Activated naive CD4-positive, alpha-beta T cell treated with anti-CD3 and anti-CD28 coated beads for 36 hours (primary cell): ENCODE measurements at regions of chr19 and their contacts with region 1.

Region 1: GRCh38 chr19:48872182-48872883 is at the start of gene PPP1R15A:
- DNase-seq: peak; percentile 99
- H3K4me3 Mint-ChIP-seq: peak within 1 kb of the TSS; percentile 99
- H3K27ac Mint-ChIP-seq: peak within 1 kb of the TSS; percentile 99
- H3K4me1 Mint-ChIP-seq: peaks cover 34% of the 10 kb centered on the region
- H3K27me3 Mint-ChIP-seq: no peaks in the 10 kb centered on the region
- total RNA-seq, gene PPP1R15A: 96.5 to 97.4 TPM

Region 2: GRCh38 chr19:48713864-48714758 is 158.2 kb before region 1 on chr19:
- CTCF ChIA-PET with region 1: no interaction called
- intact Hi-C with region 1: loop called (anchors 1 kb)
- DNase-seq: peak; percentile 99
- H3K4me3 Mint-ChIP-seq: peak overlapping the region; percentile 86
- H3K27ac Mint-ChIP-seq: peak overlapping the region; percentile 58
- H3K4me1 Mint-ChIP-seq: peaks cover 11% of the 10 kb centered on the region
- H3K27me3 Mint-ChIP-seq: no peaks in the 10 kb centered on the region

Region 3: DNA sequence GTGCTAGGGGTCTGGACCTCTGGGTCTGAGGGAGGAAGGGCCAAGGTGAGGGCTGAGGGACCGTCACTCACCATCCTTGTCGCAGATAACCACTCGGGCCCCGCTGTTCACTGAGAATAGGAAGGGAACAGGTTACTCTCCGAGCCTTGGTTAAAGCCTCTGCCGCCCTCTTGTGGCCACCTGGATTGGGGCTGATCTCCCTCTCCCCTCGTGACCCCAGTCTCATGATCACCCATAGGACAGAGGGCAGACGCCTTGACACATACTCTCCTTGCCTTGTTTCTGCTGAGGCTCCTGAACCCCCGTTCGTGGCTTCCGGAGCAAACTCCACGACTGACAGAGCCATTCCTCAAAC is 36.6 kb before region 1 on chr19:
- CTCF ChIA-PET with region 1: no interaction called
- intact Hi-C with region 1: loop called (anchors 2 kb)
- DNase-seq: peak; percentile 98
- H3K4me3 Mint-ChIP-seq: peak overlapping the region; percentile 73
- H3K27ac Mint-ChIP-seq: no peak overlapping the region
- H3K4me1 Mint-ChIP-seq: peaks cover 20% of the 10 kb centered on the region
- H3K27me3 Mint-ChIP-seq: peaks cover 2% of the 10 kb centered on the region

Region 4: DNA sequence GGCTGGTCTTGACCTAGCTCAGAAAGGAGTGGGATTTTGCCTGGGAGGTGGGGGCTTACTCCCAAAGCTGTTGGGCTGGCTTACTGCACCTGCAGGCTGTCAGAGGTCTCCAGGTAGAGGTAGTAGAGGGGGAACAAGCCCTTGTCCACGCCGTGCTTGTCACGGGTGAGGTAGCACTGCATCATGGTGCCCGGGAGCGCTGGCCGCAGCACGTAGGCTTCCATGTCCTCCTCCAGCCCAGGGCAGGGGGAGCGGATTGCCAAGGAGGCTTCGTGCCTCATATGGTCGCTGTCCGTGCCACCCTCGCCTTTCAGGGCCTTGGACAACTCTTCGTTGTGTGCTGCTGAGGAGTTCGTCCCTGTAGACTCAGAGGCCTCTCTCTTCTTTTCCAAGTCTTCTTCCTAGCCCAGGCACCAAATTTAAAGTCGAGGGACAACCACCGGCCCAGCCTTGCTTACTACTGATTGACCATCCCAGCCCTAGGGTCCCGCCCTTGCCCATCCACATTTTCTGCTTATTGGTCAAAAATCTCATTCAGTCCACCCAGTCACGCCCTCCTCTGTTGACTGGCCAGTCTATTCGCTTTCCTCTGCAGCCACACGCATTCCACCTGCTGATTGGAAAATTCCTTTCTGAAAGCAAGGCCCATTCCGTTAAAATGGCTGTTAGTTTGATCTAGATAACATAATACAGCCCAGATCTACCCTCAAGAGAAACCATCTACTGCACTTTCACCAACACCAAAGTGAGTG is 15.7 kb after region 1 on chr19:
- CTCF ChIA-PET with region 1: no interaction called
- intact Hi-C with region 1: no loop called
- DNase-seq: no peak
- H3K4me3 Mint-ChIP-seq: no peak overlapping the region
- H3K27ac Mint-ChIP-seq: no peak overlapping the region
- H3K4me1 Mint-ChIP-seq: no peaks in the 10 kb centered on the region
- H3K27me3 Mint-ChIP-seq: peaks cover 10% of the 10 kb centered on the region

Region 5: DNA sequence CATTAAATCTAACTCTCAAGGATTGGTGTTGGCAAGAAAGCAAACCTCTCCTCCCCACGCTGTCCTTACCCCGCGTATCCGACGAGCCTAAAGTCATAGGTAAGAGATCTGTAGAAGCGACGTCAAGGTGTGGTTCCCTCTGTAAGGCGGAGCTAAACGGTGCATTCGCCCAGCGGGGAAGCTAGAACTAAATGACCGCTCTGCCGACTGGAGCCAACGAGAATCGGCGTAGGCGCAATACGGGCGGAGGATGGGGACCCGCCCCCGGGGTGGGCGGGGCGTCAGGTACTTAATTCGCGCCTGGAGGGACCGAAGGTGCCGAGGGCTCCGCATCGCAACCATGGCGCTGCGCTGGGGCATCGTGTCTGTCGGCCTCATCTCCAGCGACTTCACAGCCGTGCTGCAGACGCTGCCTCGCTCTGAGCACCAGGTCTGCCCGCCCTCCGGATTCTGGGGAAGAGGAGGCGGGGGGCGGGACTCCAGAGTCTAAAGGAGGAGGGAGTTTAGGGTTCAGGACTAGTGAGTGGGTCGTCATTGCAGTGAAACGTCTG is 61.1 kb after region 1 on chr19 and contains the start of gene DHDH:
- CTCF ChIA-PET with region 1: no interaction called
- intact Hi-C with region 1: loop called (anchors 2 kb)
- DNase-seq: peak; percentile 91
- H3K4me3 Mint-ChIP-seq: peak within 1 kb of the TSS; percentile 83
- H3K27ac Mint-ChIP-seq: peak within 1 kb of the TSS; percentile 4
- H3K4me1 Mint-ChIP-seq: peaks cover 7% of the 10 kb centered on the region
- H3K27me3 Mint-ChIP-seq: no peaks in the 10 kb centered on the region
- total RNA-seq, gene DHDH: 4.2 to 4.5 TPM

Region 6: GRCh38 chr19:48946463-48947257 is 74.3 kb after region 1 on chr19:
- CTCF ChIA-PET with region 1: no interaction called
- intact Hi-C with region 1: no loop called
- DNase-seq: no peak
- H3K4me3 Mint-ChIP-seq: no peak overlapping the region
- H3K27ac Mint-ChIP-seq: no peak overlapping the region
- H3K4me1 Mint-ChIP-seq: no peaks in the 10 kb centered on the region
- H3K27me3 Mint-ChIP-seq: no peaks in the 10 kb centered on the region

Region 7: GRCh38 chr19:48970923-48971395 is 98.6 kb after region 1 on chr19:
- CTCF ChIA-PET with region 1: interaction called, 11 read pairs
- intact Hi-C with region 1: no loop called
- DNase-seq: peak; percentile 91
- H3K4me3 Mint-ChIP-seq: no peak overlapping the region
- H3K27ac Mint-ChIP-seq: peak overlapping the region; percentile 28
- H3K4me1 Mint-ChIP-seq: peaks cover 21% of the 10 kb centered on the region
- H3K27me3 Mint-ChIP-seq: no peaks in the 10 kb centered on the region

Region 8: DNA sequence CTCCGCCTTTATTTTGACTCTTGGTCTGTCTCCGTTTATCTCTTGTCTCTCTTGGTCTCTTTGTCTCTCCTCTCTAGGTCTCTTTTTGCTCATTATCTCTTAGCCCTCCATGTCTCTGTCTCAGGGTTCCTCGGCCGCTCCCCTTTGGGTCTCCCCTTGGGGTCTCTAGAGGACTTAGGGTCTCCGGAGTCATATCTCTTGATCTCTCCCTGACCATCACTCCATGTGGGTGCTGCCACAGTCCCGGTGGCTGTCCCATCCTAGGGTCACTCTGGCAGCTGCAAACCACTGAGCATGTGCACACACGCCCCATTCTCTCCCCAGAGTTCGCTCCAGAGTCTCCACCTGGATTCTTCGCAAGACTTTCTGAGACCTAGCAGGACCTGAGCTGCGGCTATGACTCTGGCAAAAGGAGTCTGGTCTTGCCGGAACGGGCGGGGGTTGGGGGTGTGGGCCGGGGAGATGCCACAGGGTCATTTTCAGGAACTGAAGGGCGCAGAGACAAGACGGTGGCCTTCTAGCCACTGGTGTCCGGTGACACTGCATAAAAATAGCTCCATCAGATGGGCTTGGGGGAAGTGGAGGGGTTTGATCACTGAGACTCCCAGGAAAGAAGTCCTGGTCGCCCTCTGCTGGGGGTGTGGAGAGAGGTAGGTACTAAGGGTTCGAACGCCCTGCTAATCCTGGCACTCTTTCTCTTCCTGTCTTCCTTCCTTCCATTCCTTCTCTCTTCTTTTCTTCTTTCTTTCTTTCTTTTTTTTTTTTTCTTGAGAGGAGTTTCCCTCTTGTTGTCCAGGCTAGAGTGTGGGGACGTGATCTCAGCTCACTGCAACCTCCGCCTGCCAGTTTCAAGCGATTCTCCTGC is 201.4 kb after region 1 on chr19:
- CTCF ChIA-PET with region 1: no interaction called
- intact Hi-C with region 1: no loop called
- DNase-seq: peak; percentile 26
- H3K4me3 Mint-ChIP-seq: no peak overlapping the region
- H3K27ac Mint-ChIP-seq: no peak overlapping the region
- H3K4me1 Mint-ChIP-seq: peaks cover 9% of the 10 kb centered on the region
- H3K27me3 Mint-ChIP-seq: peaks cover 43% of the 10 kb centered on the region

Region 9: GRCh38 chr19:49497047-49497788 is 624.9 kb after region 1 on chr19:
- CTCF ChIA-PET with region 1: no interaction called
- intact Hi-C with region 1: loop called (anchors 10 kb)
- DNase-seq: peak; percentile 79
- H3K4me3 Mint-ChIP-seq: peak overlapping the region; percentile 87
- H3K27ac Mint-ChIP-seq: peak overlapping the region; percentile 96
- H3K4me1 Mint-ChIP-seq: peaks cover 49% of the 10 kb centered on the region
- H3K27me3 Mint-ChIP-seq: no peaks in the 10 kb centered on the region